ENCODE measurements at regions of chr3 and their contacts with region 1.

Region 1: GRCh38 chr3:126475413-126476114 is at the start of gene ZXDC:
- DNase-seq: peak; percentile 92
- H3K4me3 Mint-ChIP-seq: peak within 1 kb of the TSS; percentile 82
- H3K27ac Mint-ChIP-seq: peak within 1 kb of the TSS; percentile 91
- H3K4me1 Mint-ChIP-seq: peaks cover 29% of the 10 kb centered on the region
- H3K27me3 Mint-ChIP-seq: no peaks in the 10 kb centered on the region
- CTCF ChIP-seq: peak; percentile 17
- total RNA-seq, gene ZXDC: 37.2 and 37.5 TPM in 2 replicates

Region 2: GRCh38 chr3:126245811-126246727 is 229.5 kb before region 1 on chr3:
- CTCF ChIA-PET with region 1: interaction called, 7 read pairs
- POLR2A ChIA-PET with region 1: interaction called, 4 read pairs
- intact Hi-C with region 1: loop called (anchors 10 kb)
- DNase-seq: peak; percentile 62
- H3K4me3 Mint-ChIP-seq: no peak overlapping the region
- H3K27ac Mint-ChIP-seq: no peak overlapping the region
- H3K4me1 Mint-ChIP-seq: no peaks in the 10 kb centered on the region
- H3K27me3 Mint-ChIP-seq: no peaks in the 10 kb centered on the region
- CTCF ChIP-seq: peak; percentile 43

Region 3: GRCh38 chr3:126485956-126486355 is 10.4 kb after region 1 on chr3:
- CTCF ChIA-PET with region 1: no interaction called
- POLR2A ChIA-PET with region 1: no interaction called
- intact Hi-C with region 1: no loop called
- DNase-seq: no peak
- H3K4me3 Mint-ChIP-seq: no peak overlapping the region
- H3K27ac Mint-ChIP-seq: no peak overlapping the region
- H3K4me1 Mint-ChIP-seq: peaks cover 18% of the 10 kb centered on the region
- H3K27me3 Mint-ChIP-seq: no peaks in the 10 kb centered on the region
- CTCF ChIP-seq: no peak

Region 4: DNA sequence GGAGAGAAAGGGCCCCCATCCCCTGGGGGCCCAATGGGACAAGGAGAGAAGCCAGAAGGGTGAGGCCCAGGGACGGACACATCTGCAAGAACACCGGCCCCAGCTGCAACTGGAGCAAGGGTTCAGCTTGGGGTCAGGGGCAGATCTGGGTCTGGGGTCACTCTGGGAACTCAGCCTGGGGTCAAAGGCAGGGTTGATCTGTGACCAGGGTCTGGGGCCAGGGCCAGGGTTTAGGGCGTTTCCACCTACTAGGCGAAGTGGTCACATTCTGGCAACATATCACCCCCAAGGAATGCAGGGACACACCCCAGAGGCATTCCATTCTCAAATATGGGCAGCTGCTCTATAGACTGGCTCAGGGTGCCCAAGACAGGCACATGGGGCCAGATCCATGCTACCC is 33.0 kb after region 1 on chr3:
- CTCF ChIA-PET with region 1: no interaction called
- POLR2A ChIA-PET with region 1: no interaction called
- intact Hi-C with region 1: no loop called
- DNase-seq: no peak
- H3K4me3 Mint-ChIP-seq: no peak overlapping the region
- H3K27ac Mint-ChIP-seq: no peak overlapping the region
- H3K4me1 Mint-ChIP-seq: no peaks in the 10 kb centered on the region
- H3K27me3 Mint-ChIP-seq: peaks cover 14% of the 10 kb centered on the region
- CTCF ChIP-seq: no peak

Region 5: GRCh38 chr3:126537730-126538281 is 62.2 kb after region 1 on chr3:
- CTCF ChIA-PET with region 1: no interaction called
- POLR2A ChIA-PET with region 1: no interaction called
- intact Hi-C with region 1: loop called (anchors 2 kb)
- DNase-seq: no peak
- H3K4me3 Mint-ChIP-seq: no peak overlapping the region
- H3K27ac Mint-ChIP-seq: no peak overlapping the region
- H3K4me1 Mint-ChIP-seq: peaks cover 16% of the 10 kb centered on the region
- H3K27me3 Mint-ChIP-seq: peaks cover 60% of the 10 kb centered on the region
- CTCF ChIP-seq: no peak

Measured in MCF 10A (cell line).